ENCODE measurements at regions of chr6 and their contacts with region 1.

Region 1: DNA sequence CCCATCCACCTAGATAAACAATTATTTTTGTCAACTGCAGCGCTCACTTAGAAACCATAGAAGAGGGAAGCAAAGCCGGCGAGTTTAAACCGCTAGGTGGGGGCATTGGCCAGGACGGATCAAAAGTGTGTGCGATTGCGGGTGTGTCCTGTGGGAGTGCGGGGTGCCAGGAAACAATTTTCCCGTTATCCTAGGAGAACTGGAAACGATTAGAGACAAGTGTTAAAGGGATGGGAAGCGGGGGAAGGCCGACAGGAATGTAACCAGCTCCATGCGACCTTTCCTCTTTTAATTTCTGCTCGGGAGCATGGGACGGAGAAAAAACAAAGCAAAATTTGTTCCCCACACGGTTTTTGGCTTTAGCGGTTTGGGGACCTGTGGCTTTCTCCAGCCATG is 2.8 kb upstream of the HTR1B start:
- DNase-seq: no peak
- ATAC-seq: peak; percentile 83
- H3K4me3 ChIP-seq: peak overlapping the region; percentile 63
- H3K27ac ChIP-seq: no peak overlapping the region
- H3K4me1 ChIP-seq: no peaks in the 10 kb centered on the region
- H3K27me3 ChIP-seq: peaks cover 12 to 16% of the 10 kb centered on the region in 2 experiments
- CTCF ChIP-seq: peak; percentile 64 to 67 (median 65)
- EP300 ChIP-seq: no peak
- POLR2A ChIP-seq: no peak
- RAD21 ChIP-seq: peak; percentile 76

Region 2: DNA sequence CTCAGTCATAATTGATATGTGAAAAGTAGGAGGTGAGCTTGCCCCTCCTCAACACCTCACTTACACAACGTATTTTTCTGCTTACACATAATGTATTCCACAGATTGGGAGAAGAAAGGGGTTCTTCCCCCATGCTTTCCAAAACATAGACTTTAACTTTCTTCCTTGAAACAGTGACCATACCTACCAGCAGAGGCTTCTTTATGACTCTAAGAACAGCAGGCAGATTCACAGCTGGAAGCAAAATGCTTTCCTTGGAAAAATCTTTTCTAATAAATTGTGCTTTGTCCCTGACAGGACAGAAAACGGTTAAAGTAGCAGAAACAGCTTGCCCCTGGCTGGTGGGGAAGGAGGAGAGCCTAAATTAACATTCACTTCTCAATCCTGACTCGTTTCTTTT is 764.4 kb before region 1 on chr6:
- CTCF ChIA-PET with region 1: no interaction called
- POLR2A ChIA-PET with region 1: no interaction called
- RAD21 ChIA-PET with region 1: no interaction called
- SMC1A ChIA-PET with region 1: no interaction called
- in situ Hi-C with region 1: no loop called
- intact Hi-C with region 1: no loop called
- DNase-seq: no peak
- ATAC-seq: no peak
- H3K4me3 ChIP-seq: no peak overlapping the region
- H3K27ac ChIP-seq: no peak overlapping the region
- H3K4me1 ChIP-seq: no peaks in the 10 kb centered on the region
- H3K27me3 ChIP-seq: no peaks in the 10 kb centered on the region
- CTCF ChIP-seq: no peak
- EP300 ChIP-seq: no peak
- POLR2A ChIP-seq: no peak
- RAD21 ChIP-seq: no peak

Region 3: GRCh38 chr6:77318256-77318655 is 147.8 kb before region 1 on chr6:
- CTCF ChIA-PET with region 1: no interaction called
- POLR2A ChIA-PET with region 1: no interaction called
- RAD21 ChIA-PET with region 1: no interaction called
- SMC1A ChIA-PET with region 1: no interaction called
- in situ Hi-C with region 1: no loop called
- intact Hi-C with region 1: no loop called
- DNase-seq: no peak
- ATAC-seq: no peak
- H3K4me3 ChIP-seq: no peak overlapping the region
- H3K27ac ChIP-seq: no peak overlapping the region
- H3K4me1 ChIP-seq: no peaks in the 10 kb centered on the region
- H3K27me3 ChIP-seq: no peaks in the 10 kb centered on the region
- CTCF ChIP-seq: no peak
- EP300 ChIP-seq: no peak
- POLR2A ChIP-seq: no peak
- RAD21 ChIP-seq: no peak

Region 4: DNA sequence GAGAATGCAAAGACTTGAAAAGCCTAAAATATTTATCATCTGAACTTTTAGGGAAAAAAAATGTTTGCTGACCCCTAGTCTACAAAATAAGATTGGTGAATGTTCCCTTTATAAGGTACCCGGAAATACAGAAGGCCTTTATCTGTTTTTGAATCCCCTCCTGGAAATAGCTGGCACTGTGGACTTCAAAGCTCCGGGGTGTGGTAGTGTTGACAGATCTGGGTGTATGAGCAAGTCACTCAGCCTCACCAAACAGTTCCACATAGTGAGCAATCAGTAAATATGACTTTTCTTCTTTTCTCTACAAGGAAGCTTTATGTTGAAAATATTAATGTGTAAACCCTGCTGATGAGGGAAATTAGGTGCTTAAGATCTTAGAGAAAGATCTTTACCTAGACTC is 26.5 kb after region 1 on chr6:
- CTCF ChIA-PET with region 1: interaction called, 4 read pairs
- POLR2A ChIA-PET with region 1: no interaction called
- RAD21 ChIA-PET with region 1: interaction called, 4 read pairs
- SMC1A ChIA-PET with region 1: interaction called, 11 read pairs
- in situ Hi-C with region 1: no loop called
- intact Hi-C with region 1: no loop called
- DNase-seq: no peak
- ATAC-seq: no peak
- H3K4me3 ChIP-seq: no peak overlapping the region
- H3K27ac ChIP-seq: no peak overlapping the region
- H3K4me1 ChIP-seq: no peaks in the 10 kb centered on the region
- H3K27me3 ChIP-seq: no peaks in the 10 kb centered on the region
- CTCF ChIP-seq: no peak
- EP300 ChIP-seq: no peak
- POLR2A ChIP-seq: no peak
- RAD21 ChIP-seq: no peak

Region 5: DNA sequence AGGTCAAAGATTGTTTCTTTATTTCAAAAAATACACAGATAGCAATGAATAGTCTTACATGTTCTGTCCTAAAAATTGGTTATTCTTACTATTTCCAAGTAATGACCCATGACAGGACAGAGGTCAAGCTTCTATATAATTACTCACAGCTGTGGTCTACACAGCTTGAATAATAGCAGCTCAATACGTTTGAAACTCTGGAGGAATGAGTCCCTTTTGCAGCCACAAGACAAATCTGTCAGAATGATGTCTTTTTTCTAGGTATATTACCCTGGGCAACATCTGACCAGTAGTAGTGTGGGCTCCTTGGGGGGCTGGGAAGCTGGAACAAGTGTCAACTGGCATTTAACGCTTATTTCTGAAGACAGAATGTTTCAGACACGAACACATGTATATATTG is 82.1 kb after region 1 on chr6:
- CTCF ChIA-PET with region 1: interaction called, 12 read pairs
- POLR2A ChIA-PET with region 1: interaction called, 4 read pairs
- RAD21 ChIA-PET with region 1: interaction called, 238 read pairs
- SMC1A ChIA-PET with region 1: interaction called, 14 read pairs
- in situ Hi-C with region 1: no loop called
- intact Hi-C with region 1: loop called (anchors 5 kb)
- DNase-seq: no peak
- ATAC-seq: peak; percentile 69
- H3K4me3 ChIP-seq: no peak overlapping the region
- H3K27ac ChIP-seq: no peak overlapping the region
- H3K4me1 ChIP-seq: no peaks in the 10 kb centered on the region
- H3K27me3 ChIP-seq: no peaks in the 10 kb centered on the region
- CTCF ChIP-seq: no peak
- EP300 ChIP-seq: no peak
- POLR2A ChIP-seq: no peak
- RAD21 ChIP-seq: no peak

Region 6: DNA sequence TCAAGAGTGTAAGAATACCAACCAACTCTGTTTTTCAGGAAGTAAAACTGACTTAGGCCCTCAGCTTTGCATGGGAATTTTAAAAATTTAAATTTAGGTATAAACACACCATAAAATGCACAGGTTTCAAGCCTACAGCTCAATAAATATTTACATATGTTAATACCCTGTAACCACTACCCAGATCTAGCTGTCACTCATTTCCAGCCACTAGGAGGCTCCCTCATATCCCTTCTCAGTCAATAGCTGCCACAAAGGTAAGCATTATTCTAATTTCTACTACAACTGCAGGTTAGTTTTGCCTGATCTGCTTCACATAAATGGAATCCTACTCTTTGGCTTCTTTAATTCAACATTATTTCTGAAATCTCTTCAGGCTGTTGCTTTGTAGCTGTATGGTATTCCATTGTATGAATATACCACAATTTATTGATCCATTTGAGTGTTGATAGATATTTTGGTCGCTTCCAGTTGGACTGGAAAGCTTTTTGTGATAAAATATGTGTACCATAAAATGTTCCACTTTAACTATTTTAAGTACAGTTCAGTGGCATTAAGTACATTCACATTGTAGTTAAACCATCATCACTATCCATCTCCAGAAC is 154.3 kb after region 1 on chr6:
- CTCF ChIA-PET with region 1: interaction called, 40 read pairs
- POLR2A ChIA-PET with region 1: no interaction called
- RAD21 ChIA-PET with region 1: interaction called, 13 read pairs
- SMC1A ChIA-PET with region 1: interaction called, 5 read pairs
- in situ Hi-C with region 1: no loop called
- intact Hi-C with region 1: loop called (anchors 5 kb)
- DNase-seq: no peak
- ATAC-seq: peak; percentile 91
- H3K4me3 ChIP-seq: no peak overlapping the region
- H3K27ac ChIP-seq: no peak overlapping the region
- H3K4me1 ChIP-seq: no peaks in the 10 kb centered on the region
- H3K27me3 ChIP-seq: no peaks in the 10 kb centered on the region
- CTCF ChIP-seq: peak; percentile 46 to 63 (median 49)
- EP300 ChIP-seq: no peak
- POLR2A ChIP-seq: no peak
- RAD21 ChIP-seq: peak; percentile 44

Region 7: GRCh38 chr6:77814119-77814518 is 348.1 kb after region 1 on chr6:
- CTCF ChIA-PET with region 1: interaction called, 8 read pairs
- POLR2A ChIA-PET with region 1: no interaction called
- RAD21 ChIA-PET with region 1: interaction called, 3 read pairs
- SMC1A ChIA-PET with region 1: no interaction called
- in situ Hi-C with region 1: no loop called
- intact Hi-C with region 1: loop called (anchors 10 kb)
- DNase-seq: no peak
- ATAC-seq: no peak
- H3K4me3 ChIP-seq: no peak overlapping the region
- H3K27ac ChIP-seq: no peak overlapping the region
- H3K4me1 ChIP-seq: no peaks in the 10 kb centered on the region
- H3K27me3 ChIP-seq: no peaks in the 10 kb centered on the region
- CTCF ChIP-seq: no peak
- EP300 ChIP-seq: no peak
- POLR2A ChIP-seq: no peak
- RAD21 ChIP-seq: no peak

Region 8: GRCh38 chr6:77926198-77926752 is 460.2 kb after region 1 on chr6:
- CTCF ChIA-PET with region 1: interaction called, 87 read pairs
- POLR2A ChIA-PET with region 1: no interaction called
- RAD21 ChIA-PET with region 1: interaction called, 38 read pairs
- SMC1A ChIA-PET with region 1: interaction called, 73 read pairs
- in situ Hi-C with region 1: no loop called
- intact Hi-C with region 1: loop called (anchors 1 kb)
- DNase-seq: no peak
- ATAC-seq: peak; percentile 80
- H3K4me3 ChIP-seq: no peak overlapping the region
- H3K27ac ChIP-seq: no peak overlapping the region
- H3K4me1 ChIP-seq: no peaks in the 10 kb centered on the region
- H3K27me3 ChIP-seq: no peaks in the 10 kb centered on the region
- CTCF ChIP-seq: peak in 2 of 3 experiments; percentile 20 to 45; a peak in 3 of 6 replicates
- EP300 ChIP-seq: no peak
- POLR2A ChIP-seq: no peak
- RAD21 ChIP-seq: peak; percentile 58